Cardiac septum (tissue), 1 donor: ENCODE measurements at regions of chr3 and their contacts with region 1.

Region 1: DNA sequence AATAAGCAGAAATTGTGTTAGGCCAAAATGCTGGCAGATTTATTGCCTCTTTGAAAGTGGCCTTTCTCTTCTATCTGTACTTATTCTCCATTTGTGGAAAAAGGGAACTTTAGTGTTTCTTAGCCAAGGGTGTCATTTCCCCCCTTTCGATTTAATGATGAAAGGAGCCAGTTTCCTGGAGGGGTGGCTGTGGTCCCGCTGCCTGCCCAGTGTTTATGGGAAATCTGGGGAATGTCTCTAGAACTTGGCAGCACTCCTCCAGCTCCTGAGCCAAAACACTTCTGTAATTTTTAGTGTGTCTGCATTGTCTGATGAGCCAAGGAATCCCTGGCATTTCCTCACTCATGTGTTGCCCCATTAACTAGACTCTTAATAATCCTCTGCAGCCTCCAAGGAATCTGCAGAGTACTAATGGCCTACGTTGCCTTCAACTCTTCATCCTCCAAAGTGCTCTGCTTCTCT is 448.8 kb downstream of the GRM7 start:
- DNase-seq: peak; percentile 76

Region 2: GRCh38 chr3:7205962-7206361 is 103.7 kb before region 1 on chr3:
- intact Hi-C with region 1: no loop called
- DNase-seq: no peak

Region 3: DNA sequence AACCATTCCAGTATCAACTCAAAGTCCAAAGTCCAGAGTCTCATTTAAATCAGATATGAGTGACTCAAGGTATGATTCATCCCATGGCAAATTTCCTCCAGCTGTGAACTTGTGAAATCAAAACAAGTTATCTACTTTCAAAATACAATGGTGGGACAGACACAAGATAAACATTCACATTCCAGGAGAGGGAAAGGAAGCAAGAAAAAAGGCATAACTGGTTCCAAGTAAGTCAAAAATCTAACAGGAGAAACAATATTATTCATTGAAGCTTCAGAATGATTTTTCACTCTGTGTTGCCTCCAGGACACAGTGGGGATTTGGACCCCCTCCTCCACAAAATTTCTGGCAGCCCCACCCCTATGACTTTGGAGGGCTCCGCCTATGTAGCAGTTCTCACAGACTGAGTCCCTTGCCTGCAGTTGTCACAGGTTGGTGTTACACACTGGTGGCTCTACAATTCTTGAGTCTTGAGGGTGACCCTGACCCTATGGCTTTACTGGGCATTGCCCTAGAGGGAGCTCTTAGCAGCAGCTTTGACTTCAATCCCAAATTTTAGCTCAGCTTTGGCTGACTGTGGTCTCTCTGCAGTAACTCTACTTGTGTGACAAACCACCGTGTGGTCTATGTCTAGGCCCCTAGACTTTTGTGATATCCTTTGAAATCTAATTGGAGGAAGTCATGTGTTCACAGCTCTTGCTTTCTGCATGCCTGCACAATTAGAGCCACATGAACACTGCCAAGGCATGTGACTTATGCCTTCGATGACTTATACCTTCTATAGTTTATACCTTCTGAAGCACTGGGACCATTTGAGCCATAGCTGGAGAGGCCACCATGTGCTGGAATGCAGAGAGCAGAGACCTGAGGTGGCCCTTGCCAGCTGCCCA is 195.5 kb after region 1 on chr3:
- intact Hi-C with region 1: loop called (anchors 2 kb)
- DNase-seq: no peak

Region 4: GRCh38 chr3:7682822-7683229 is 373.2 kb after region 1 on chr3:
- intact Hi-C with region 1: loop called (anchors 10 kb)
- DNase-seq: no peak